ENCODE measurements at regions of chrX and their contacts with region 1.

Region 1: GRCh38 chrX:154046031-154046781 is 26.5 kb upstream of the IRAK1 start:
- DNase-seq: no peak
- ATAC-seq: peak; percentile 80

Region 2: GRCh38 chrX:154013614-154014360 is 32.4 kb before region 1 on chrX:
- intact Hi-C with region 1: loop called (anchors 5 kb)
- DNase-seq: no peak
- ATAC-seq: peak; percentile 81

Region 3: GRCh38 chrX:154082396-154083125 is 36.4 kb after region 1 on chrX:
- intact Hi-C with region 1: loop called (anchors 5 kb)
- DNase-seq: no peak
- ATAC-seq: no peak

Measured in Right ventricle myocardium inferior (tissue), 1 donor.